CD14-positive monocyte (primary cell): ENCODE measurements at regions of chr13 and their contacts with region 1.

Region 1: GRCh38 chr13:36275190-36276002 is 22.2 kb downstream of the CCDC169 start:
- DNase-seq: peak in 2 of 3 donors; percentile 8 to 14
- H3K4me3 ChIP-seq: no peak overlapping the region
- H3K4me3 Mint-ChIP-seq: no peak overlapping the region
- H3K27ac ChIP-seq: no peak overlapping the region
- H3K27ac Mint-ChIP-seq: peak overlapping the region in 1 of 7 donors; percentile 5
- H3K4me1 ChIP-seq: no peaks in the 10 kb centered on the region
- H3K4me1 Mint-ChIP-seq: no peaks in the 10 kb centered on the region
- H3K27me3 ChIP-seq: no peaks in the 10 kb centered on the region
- H3K27me3 Mint-ChIP-seq: peaks cover 0 to 3% (median 0%) of the 10 kb centered on the region in 3 donors
- CTCF ChIP-seq: peak; percentile 53

Region 2: DNA sequence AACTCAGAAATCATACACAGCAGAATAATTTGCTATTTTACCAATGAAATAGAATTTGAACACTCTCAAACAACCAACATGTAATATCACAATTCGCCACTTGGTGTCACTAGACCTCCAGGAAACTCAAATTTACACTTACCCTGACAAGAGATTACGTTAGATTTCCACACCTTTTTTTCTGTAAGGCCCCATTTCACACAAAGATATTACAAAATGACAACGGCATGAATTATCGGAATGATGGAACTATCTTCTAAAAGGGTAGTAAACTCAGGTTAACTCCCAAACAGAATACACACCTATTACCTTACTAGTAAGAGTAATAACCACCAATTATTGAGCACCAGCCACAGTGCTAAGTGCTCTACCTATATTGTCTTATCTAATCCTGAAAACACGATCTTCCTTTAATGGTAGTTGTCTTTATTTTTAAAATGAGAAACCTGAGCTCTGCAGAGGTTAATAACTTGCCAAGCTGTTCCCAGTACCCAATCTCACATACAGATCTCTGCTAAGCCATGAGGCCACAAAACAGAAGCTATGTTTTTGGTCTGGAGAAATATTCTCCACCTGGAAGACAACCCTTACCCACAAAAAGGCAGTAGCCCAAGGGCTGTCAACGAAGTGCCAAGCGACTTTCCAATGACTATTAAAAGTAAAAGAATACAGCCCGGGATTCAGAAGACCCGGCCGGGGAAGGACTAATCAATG is 296.6 kb before region 1 on chr13:
- intact Hi-C with region 1: loop called in 1 of 2 experiments (anchors 10 kb)
- DNase-seq: peak in 1 of 3 donors; percentile 6
- H3K4me3 ChIP-seq: no peak overlapping the region
- H3K4me3 Mint-ChIP-seq: no peak overlapping the region
- H3K27ac ChIP-seq: no peak overlapping the region
- H3K27ac Mint-ChIP-seq: no peak overlapping the region
- H3K4me1 ChIP-seq: no peaks in the 10 kb centered on the region
- H3K4me1 Mint-ChIP-seq: no peaks in the 10 kb centered on the region
- H3K27me3 ChIP-seq: no peaks in the 10 kb centered on the region
- H3K27me3 Mint-ChIP-seq: peaks cover 0 to 4% (median 4%) of the 10 kb centered on the region in 3 donors
- CTCF ChIP-seq: peak; percentile 78